Activated T-helper 1 cell treated with anti-CD3 and anti-CD28 coated beads, Interleukin-12 subunit alpha, Interleukin-12 subunit beta, Interleukin-2, Interleukin-4 antibody, amounts not matched to agents 30 ng/mL and 10 ng/mL and 1 ng/mL, durations not matched to agents 14 hours and 24 hours and 36 hours (primary cell): ENCODE measurements at regions of chr3 and their contacts with region 1.

Region 1: GRCh38 chr3:46960081-46960701 is 16.4 kb downstream of the CCDC12 start:
- DNase-seq: no peak
- H3K4me3 Mint-ChIP-seq: peak overlapping the region; percentile 15
- H3K27ac Mint-ChIP-seq: peak overlapping the region; percentile 83
- H3K4me1 Mint-ChIP-seq: peaks cover 61% of the 10 kb centered on the region
- H3K27me3 Mint-ChIP-seq: no peaks in the 10 kb centered on the region

Region 2: DNA sequence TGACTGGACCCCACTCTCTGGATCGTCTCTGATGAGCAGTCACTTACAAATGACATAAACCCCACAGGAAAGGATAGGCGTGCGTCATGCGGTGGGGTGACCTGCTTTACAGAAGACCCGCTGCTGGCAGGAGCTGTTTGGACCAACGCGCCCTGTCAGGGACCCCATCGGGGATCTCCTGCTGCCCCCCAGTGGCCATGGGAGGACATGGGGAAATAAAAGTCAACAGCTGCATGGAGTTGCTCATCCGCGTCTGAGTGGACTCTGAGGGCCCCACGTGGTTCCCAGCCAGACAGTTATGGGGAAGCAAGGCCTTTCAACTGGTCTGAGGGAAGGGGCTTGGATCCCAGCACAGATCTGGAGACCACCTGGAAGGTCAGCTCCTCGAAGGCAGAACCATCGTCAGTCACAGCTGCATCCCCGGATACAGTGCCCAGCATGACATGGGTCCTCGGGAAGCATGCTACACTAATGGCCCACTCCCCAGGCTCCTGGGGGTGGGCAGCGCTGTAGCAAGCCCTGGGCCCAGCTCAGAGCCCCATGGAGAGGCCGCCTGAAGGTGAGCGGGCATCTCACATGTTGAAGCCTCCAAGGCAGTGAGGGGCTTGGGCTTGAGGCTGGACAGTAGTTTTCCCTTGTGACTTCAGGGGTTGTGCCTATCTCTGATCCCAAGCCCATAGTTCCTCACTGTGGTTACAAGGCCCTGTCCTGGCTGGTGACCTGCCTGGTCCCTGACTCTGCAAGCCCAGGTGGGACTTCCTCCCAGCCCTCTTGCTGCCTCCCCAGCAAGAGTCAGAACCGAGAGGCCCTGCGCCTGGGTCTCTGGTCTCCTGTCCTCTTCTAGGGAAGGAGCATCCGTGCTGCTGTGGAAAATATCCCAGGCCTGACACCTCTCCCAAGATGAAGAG is 50.4 kb before region 1 on chr3:
- intact Hi-C with region 1: loop called (anchors 1 kb)
- DNase-seq: peak; percentile 61
- H3K4me3 Mint-ChIP-seq: no peak overlapping the region
- H3K27ac Mint-ChIP-seq: no peak overlapping the region
- H3K4me1 Mint-ChIP-seq: peaks cover 15% of the 10 kb centered on the region
- H3K27me3 Mint-ChIP-seq: no peaks in the 10 kb centered on the region

Region 3: GRCh38 chr3:46923559-46924350 is 36.4 kb before region 1 on chr3:
- intact Hi-C with region 1: loop called (anchors 5 kb)
- DNase-seq: no peak
- H3K4me3 Mint-ChIP-seq: no peak overlapping the region
- H3K27ac Mint-ChIP-seq: peak overlapping the region; percentile 63
- H3K4me1 Mint-ChIP-seq: peaks cover 34% of the 10 kb centered on the region
- H3K27me3 Mint-ChIP-seq: no peaks in the 10 kb centered on the region

Region 4: GRCh38 chr3:46947981-46948791 is 12.0 kb before region 1 on chr3:
- intact Hi-C with region 1: loop called (anchors 1 kb)
- DNase-seq: peak; percentile 57
- H3K4me3 Mint-ChIP-seq: peak overlapping the region; percentile 53
- H3K27ac Mint-ChIP-seq: peak overlapping the region; percentile 79
- H3K4me1 Mint-ChIP-seq: peaks cover 85% of the 10 kb centered on the region
- H3K27me3 Mint-ChIP-seq: no peaks in the 10 kb centered on the region

Region 5: GRCh38 chr3:47035634-47036033 is 75.4 kb after region 1 on chr3:
- intact Hi-C with region 1: loop called (anchors 5 kb)
- DNase-seq: no peak
- H3K4me3 Mint-ChIP-seq: no peak overlapping the region
- H3K27ac Mint-ChIP-seq: no peak overlapping the region
- H3K4me1 Mint-ChIP-seq: peaks cover 21% of the 10 kb centered on the region
- H3K27me3 Mint-ChIP-seq: no peaks in the 10 kb centered on the region